HEK293T (cell line): ENCODE measurements at regions of chr3 and their contacts with region 1.

Region 1: GRCh38 chr3:156382458-156383346 is 172.2 kb downstream of the SSR3 start:
- DNase-seq: peak; percentile 65

Region 2: GRCh38 chr3:156151824-156152428 is 230.8 kb before region 1 on chr3:
- CTCF ChIA-PET with region 1: interaction called, 10 read pairs
- POLR2A ChIA-PET with region 1: no interaction called
- DNase-seq: peak; percentile 76

Region 3: DNA sequence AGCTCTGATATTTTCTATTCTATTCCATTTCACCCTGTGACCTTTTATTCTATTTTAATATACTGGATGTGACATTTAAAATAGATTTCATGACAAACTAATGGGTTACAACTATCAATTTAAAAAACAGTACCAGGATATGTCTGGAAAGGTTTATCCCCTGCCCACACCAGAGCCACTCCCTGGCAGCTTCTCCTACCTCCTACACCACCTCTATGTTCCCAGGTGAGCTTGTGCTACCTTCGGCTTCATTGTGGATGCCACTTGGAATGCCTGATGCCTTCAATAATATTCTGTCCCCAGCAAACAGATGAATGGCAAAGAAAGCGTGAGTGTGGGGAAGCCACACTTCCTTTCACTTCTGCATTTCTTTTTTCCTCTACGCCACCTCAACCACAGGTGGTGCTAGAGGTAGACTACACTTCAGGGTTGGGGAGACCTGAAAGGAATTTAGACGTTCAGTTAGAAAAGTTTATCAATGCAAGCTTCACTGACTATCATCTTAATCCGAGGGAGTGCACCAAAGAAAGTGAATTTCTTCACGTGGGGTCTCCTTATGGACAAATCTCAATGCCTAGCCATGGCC is 40.8 kb before region 1 on chr3:
- CTCF ChIA-PET with region 1: no interaction called
- POLR2A ChIA-PET with region 1: no interaction called
- DNase-seq: no peak

Region 4: DNA sequence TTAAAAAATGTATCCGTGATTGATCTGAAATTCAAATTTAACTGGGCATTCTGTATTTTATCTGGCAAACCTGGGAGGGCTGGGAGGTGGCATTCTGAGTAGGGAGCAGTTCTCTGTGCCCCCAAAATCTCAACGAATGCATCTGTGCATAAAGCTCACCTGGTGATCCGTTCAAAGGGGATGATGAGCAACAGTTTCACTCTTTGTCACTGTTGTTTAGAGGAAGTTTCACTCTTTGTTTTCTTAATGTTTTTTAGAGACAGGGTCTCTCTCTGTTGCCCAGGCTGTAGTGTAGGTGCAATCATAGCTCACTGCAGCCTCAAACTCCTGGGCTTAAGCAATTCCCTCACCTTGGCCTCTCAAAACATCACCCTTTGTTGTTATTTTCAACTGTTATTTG is 14.5 kb before region 1 on chr3:
- CTCF ChIA-PET with region 1: no interaction called
- POLR2A ChIA-PET with region 1: no interaction called
- DNase-seq: no peak

Region 5: DNA sequence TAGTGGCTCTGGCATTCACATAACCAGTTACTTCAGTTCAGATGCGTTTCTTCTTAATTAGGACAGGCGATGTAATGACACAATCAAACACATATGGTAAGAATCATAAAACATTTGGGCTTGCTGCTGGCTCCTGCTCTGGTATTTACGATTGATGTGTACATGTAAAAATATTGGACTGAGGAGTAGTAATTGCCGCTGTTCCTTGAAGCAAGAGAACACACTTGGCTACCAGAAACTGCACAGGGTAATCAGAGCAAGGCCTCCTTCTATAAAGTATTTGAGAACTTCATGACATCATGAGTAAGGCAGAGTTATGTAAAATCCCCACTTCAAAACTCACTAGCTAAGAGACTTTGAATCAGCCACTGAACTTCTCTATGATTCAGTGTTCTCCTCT is 14.1 kb after region 1 on chr3:
- CTCF ChIA-PET with region 1: interaction called, 11 read pairs
- POLR2A ChIA-PET with region 1: no interaction called
- DNase-seq: no peak

Region 6: GRCh38 chr3:156489462-156489911 is 106.8 kb after region 1 on chr3:
- CTCF ChIA-PET with region 1: no interaction called
- POLR2A ChIA-PET with region 1: no interaction called
- DNase-seq: no peak